Panc1 (cell line): ENCODE measurements at regions of chr12 and their contacts with region 1.

Region 1: GRCh38 chr12:108635201-108635996 is 1.7 kb upstream of the SELPLG start:
- DNase-seq: no peak
- ATAC-seq: no peak
- H3K4me3 ChIP-seq: no peak overlapping the region
- H3K27ac ChIP-seq: no peak overlapping the region
- H3K4me1 ChIP-seq: peaks cover 15% of the 10 kb centered on the region
- H3K27me3 ChIP-seq: no peaks in the 10 kb centered on the region
- CTCF ChIP-seq: no peak

Region 2: GRCh38 chr12:108679106-108679681 is 43.8 kb after region 1 on chr12:
- CTCF ChIA-PET with region 1: no interaction called
- POLR2A ChIA-PET with region 1: interaction called, 12 read pairs
- in situ Hi-C with region 1: no loop called
- intact Hi-C with region 1: no loop called
- DNase-seq: no peak
- ATAC-seq: no peak
- H3K4me3 ChIP-seq: no peak overlapping the region
- H3K27ac ChIP-seq: no peak overlapping the region
- H3K4me1 ChIP-seq: 0 out of 2 replicates have a peak, but pooled peaks cover 3% of the 10 kb centered on the region
- H3K27me3 ChIP-seq: no peaks in the 10 kb centered on the region
- CTCF ChIP-seq: no peak

Region 3: GRCh38 chr12:108768591-108769500 is 133.4 kb after region 1 on chr12:
- CTCF ChIA-PET with region 1: interaction called, 11 read pairs
- POLR2A ChIA-PET with region 1: no interaction called
- in situ Hi-C with region 1: no loop called
- intact Hi-C with region 1: no loop called
- DNase-seq: no peak
- ATAC-seq: peak; percentile 60
- H3K4me3 ChIP-seq: peak overlapping the region; percentile 16 to 37
- H3K27ac ChIP-seq: no peak overlapping the region
- H3K4me1 ChIP-seq: peaks cover 6% of the 10 kb centered on the region
- H3K27me3 ChIP-seq: no peaks in the 10 kb centered on the region
- CTCF ChIP-seq: no peak; the same call in 1 of the 2 replicates